Sigmoid colon (tissue), 7 donors: ENCODE measurements at regions of chr5 and their contacts with region 1.

Region 1: GRCh38 chr5:157563373-157563928 is 12.1 kb downstream of the ADAM19 start:
- DNase-seq: no peak
- H3K4me3 ChIP-seq: no peak overlapping the region
- H3K27ac ChIP-seq: peak overlapping the region; percentile 79 to 95 (median 88)
- H3K4me1 ChIP-seq: peaks cover 0 to 96% (median 80%) of the 10 kb centered on the region in 4 donors
- H3K27me3 ChIP-seq: no peaks in the 10 kb centered on the region
- CTCF ChIP-seq: no peak
- EP300 ChIP-seq: no peak
- POLR2A ChIP-seq: no peak

Region 2: GRCh38 chr5:157516626-157517325 is 46.7 kb before region 1 on chr5:
- intact Hi-C with region 1: loop called (anchors 5 kb)
- DNase-seq: peak; percentile 88
- H3K4me3 ChIP-seq: no peak overlapping the region
- H3K27ac ChIP-seq: peak overlapping the region; percentile 77 to 95 (median 84)
- H3K4me1 ChIP-seq: peaks cover 0 to 64% (median 61%) of the 10 kb centered on the region in 4 donors
- H3K27me3 ChIP-seq: no peaks in the 10 kb centered on the region
- CTCF ChIP-seq: no peak
- EP300 ChIP-seq: peak in 3 of 4 donors; percentile 38 to 74 (median 60)
- POLR2A ChIP-seq: no peak